ENCODE measurements at regions of chr5 and their contacts with region 1.

Region 1: DNA sequence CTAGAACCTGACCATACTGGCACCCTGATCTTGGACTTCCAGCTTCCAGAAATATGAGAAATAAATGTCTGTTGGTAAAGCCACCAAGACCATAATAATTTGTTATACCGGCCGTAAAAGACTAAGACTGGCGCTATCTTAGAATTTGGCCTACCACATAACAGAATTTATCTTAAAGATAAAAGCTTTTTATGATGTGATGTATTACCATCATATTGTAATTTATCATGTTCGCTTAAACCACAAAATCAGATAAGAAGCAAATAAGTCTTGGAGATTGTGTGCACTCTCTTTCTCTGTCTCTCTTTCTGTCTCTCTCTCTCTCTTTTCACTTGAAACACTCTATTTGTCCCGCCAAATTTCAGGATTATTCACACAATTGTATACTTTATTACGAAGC is 35.6 kb downstream of the FST start:
- DNase-seq: no peak
- H3K27ac ChIP-seq: no peak overlapping the region
- CTCF ChIP-seq: no peak

Region 2: GRCh38 chr5:53355316-53355715 is 160.7 kb before region 1 on chr5:
- CTCF ChIA-PET with region 1: no interaction called
- POLR2A ChIA-PET with region 1: interaction called, 10 read pairs
- DNase-seq: no peak
- H3K27ac ChIP-seq: no peak overlapping the region
- CTCF ChIP-seq: no peak

Region 3: DNA sequence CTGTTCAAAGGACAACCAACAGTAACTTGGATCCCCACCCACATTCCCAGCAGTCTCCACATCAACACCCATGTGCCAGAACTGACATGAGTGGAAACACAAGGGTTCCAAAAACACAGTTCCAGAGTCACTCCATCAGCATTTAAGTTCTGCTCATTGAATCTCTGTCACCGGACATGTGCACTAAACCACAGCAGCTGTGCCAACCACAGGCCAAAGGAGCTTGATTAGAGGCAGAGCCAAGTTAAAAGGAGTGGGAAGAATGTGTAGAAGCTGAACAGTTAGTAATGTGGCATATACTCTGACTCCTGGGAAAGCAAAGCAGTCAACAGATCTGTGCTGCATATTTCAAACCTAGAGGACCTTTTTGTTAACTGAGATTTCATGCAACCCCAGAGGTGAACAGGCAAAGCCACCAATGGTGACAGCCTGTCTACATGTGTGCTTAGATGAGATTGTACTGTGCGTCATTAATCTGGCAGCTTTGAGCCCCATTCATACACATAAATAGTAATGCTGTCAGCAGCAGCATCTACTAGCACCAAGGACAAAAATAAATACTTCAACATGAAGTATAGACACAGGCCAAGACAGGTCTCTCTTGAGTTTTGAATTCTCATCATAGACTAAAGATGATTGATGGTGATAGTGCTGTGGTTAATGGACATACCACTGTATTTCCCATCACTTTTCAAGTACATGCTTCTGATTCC is 51.9 kb before region 1 on chr5:
- CTCF ChIA-PET with region 1: no interaction called
- POLR2A ChIA-PET with region 1: no interaction called
- DNase-seq: no peak
- H3K27ac ChIP-seq: no peak overlapping the region
- CTCF ChIP-seq: no peak